IMR-90 (cell line): ENCODE measurements at regions of chr10 and their contacts with region 1.

Region 1: DNA sequence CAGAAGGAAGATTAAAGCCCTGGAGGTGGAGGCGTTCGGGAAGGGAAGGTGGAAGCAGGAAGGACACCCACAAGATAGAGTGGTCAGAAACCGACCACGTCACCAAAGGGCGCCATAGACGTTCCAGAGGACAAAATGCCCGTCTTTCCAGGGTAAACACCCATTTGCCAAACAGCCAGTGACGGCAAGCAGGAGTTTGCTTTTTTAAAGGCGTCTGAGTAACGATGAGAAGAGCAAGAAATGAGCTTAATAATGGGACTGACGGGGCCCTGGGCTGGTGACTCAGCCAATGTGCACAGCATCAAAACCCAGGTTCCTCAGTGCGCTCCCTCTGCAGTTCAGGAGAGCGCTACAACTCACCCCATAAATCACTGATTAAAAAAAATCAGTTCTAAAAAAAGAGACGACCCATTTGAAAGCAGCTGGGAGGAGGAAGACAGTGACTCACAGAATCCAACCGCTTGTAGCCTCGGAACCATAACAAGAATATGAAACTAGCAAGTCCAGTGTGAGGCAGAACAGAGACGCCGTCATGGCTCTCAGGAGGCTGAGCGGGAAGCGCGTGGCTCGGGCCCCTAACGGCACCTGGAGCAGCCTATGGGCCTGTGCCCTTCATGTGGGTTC is 5.9 kb downstream of the DIP2C start:
- DNase-seq: peak; percentile 99
- ATAC-seq: peak; percentile 91
- H3K4me3 ChIP-seq: peak overlapping the region; percentile 33
- H3K27ac ChIP-seq: peak overlapping the region; percentile 72
- H3K4me1 ChIP-seq: peaks cover 33% of the 10 kb centered on the region
- H3K27me3 ChIP-seq: no peaks in the 10 kb centered on the region
- CTCF ChIP-seq: peak; percentile 39
- POLR2A ChIP-seq: peak; percentile 81
- RAD21 ChIP-seq: peak; percentile 38

Region 2: GRCh38 chr10:598415-599170 is 85.0 kb before region 1 on chr10:
- CTCF ChIA-PET with region 1: no interaction called
- POLR2A ChIA-PET with region 1: no interaction called
- dilution Hi-C with region 1: no loop called
- in situ Hi-C with region 1: no loop called
- intact Hi-C with region 1: loop called (anchors 5 kb)
- DNase-seq: peak; percentile 98
- ATAC-seq: peak; percentile 94
- H3K4me3 ChIP-seq: no peak overlapping the region
- H3K27ac ChIP-seq: peak overlapping the region; percentile 99
- H3K4me1 ChIP-seq: peaks cover 49% of the 10 kb centered on the region
- H3K27me3 ChIP-seq: no peaks in the 10 kb centered on the region
- CTCF ChIP-seq: no peak
- POLR2A ChIP-seq: no peak
- RAD21 ChIP-seq: peak; percentile 14; the same call in 1 of the 2 replicates